ENCODE measurements at regions of chr1 and their contacts with region 1.

Region 1: DNA sequence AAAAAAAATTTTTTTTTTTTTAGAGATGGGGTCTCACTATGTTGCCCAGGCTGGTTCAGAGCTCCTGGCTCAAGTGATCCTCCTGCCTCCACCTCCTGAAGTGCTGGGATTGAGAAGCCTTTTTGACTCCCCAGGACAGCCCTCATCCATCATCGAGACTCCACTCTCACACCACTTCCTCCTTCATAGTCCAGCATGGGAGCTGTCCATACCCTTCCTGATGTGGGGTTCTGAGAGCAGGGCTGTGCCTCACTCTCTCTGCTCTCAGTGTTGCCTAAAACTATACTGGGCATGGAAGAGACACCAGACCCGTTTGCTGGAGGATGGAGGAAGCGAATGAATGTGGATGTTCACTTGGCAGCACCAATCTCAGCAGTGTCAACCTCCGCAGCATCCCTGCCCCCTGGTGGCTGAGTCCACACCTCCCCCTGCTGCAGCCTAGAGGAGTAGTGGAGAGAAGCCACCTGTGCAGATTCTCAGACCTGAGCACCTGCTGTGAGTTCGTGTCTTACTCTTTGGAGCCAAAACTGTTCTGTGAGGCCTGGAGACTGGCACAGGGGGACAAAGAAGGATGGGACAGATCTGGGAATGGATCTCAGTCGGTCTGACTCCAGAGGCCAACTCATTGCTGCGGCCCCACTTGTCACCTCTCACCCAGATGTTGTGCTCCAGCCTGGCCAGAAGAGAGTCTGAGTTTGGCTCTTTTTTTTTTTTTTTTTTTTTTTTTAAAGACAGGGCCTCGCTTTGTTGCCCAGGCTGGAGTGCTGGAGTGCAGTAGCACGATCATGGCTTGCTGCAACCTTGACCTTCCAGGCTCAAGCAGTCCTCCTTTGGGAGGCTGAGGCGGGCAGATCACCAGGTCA is 17.7 kb downstream of the TINAGL1 start:
- DNase-seq: peak; percentile 68
- ATAC-seq: peak; percentile 92
- H3K4me3 ChIP-seq: no peak overlapping the region
- H3K27ac ChIP-seq: no peak overlapping the region
- H3K4me1 ChIP-seq: peaks cover 33 to 40% of the 10 kb centered on the region in 2 experiments
- H3K27me3 ChIP-seq: no peaks in the 10 kb centered on the region
- CTCF ChIP-seq: peak; percentile 93 to 97 (median 96)
- POLR2A ChIP-seq: no peak
- RAD21 ChIP-seq: peak; percentile 96

Region 2: GRCh38 chr1:31155216-31155841 is 438.7 kb before region 1 on chr1:
- CTCF ChIA-PET with region 1: no interaction called
- POLR2A ChIA-PET with region 1: no interaction called
- RAD21 ChIA-PET with region 1: no interaction called
- intact Hi-C with region 1: no loop called
- DNase-seq: no peak
- ATAC-seq: peak; percentile 86
- H3K4me3 ChIP-seq: peak overlapping the region; percentile 58 to 62
- H3K27ac ChIP-seq: peak overlapping the region; percentile 88
- H3K4me1 ChIP-seq: peaks cover 9 to 21% of the 10 kb centered on the region in 2 experiments
- H3K27me3 ChIP-seq: no peaks in the 10 kb centered on the region
- CTCF ChIP-seq: peak in 2 of 3 experiments; percentile 24 to 27; a peak in 1 of 6 replicates
- POLR2A ChIP-seq: no peak
- RAD21 ChIP-seq: no peak

Region 3: DNA sequence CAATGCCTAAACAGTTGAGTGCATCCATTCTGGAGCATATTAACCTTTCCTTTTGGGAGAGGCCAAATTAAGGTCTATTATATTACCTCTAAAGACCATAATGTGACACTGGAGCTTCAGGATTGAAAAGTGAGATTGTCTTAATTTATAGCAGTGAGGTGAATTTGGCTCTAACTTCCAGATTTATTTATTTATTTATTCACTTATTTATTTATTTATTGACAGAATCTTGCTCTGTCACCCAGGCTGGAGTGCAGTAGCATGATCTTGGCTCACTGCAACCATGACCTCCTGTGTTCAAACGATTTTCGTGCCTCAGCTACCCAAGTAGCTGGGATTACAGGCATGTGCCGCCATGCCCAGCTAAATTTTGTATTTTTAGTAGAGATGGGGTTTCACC is 278.1 kb before region 1 on chr1:
- CTCF ChIA-PET with region 1: no interaction called
- POLR2A ChIA-PET with region 1: no interaction called
- RAD21 ChIA-PET with region 1: no interaction called
- intact Hi-C with region 1: no loop called
- DNase-seq: no peak
- ATAC-seq: no peak
- H3K4me3 ChIP-seq: no peak overlapping the region
- H3K27ac ChIP-seq: no peak overlapping the region
- H3K4me1 ChIP-seq: no peaks in the 10 kb centered on the region
- H3K27me3 ChIP-seq: no peaks in the 10 kb centered on the region
- CTCF ChIP-seq: no peak
- POLR2A ChIP-seq: no peak
- RAD21 ChIP-seq: no peak

Region 4: DNA sequence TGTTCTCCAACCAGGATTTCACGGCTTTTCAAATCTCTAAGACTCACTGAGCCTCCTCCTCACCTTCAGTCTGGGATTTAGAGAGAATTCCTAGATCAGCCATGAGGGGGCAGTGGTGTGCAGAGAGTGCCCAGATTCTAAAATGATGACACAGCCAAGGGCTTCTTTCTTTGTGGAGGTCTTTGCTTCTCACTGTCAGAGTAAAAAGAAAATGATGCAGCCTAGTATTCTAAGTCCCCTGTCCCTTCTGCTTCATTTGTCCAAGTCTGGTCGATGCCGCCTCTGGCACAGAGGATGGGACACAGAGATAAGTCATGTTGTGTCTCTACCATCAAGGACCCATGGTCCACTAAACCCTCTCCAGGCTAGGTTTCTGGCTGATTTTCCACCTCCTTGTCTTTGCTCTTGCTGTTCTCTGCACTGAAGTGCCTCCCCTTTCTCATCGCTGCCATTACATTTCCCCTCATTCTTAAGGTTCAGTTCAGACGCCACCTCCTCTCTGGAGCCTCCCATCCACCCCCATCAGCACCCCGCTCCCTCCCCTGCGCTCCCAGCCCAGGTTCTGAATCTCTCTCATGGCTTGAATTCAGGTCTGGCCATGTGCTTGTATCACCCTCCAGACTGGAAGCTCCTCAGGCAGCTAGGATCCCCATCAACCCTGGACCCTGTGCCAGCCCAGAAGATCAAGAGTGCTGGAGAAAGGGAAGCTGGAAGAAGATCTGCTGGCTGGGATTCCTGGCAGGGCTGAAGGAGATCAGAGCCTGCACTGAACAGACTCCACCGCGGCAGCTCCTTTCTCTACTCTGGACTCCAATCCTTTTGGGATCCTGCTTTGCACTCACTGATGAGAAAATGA is 29.6 kb before region 1 on chr1:
- CTCF ChIA-PET with region 1: interaction called, 6 read pairs
- POLR2A ChIA-PET with region 1: no interaction called
- RAD21 ChIA-PET with region 1: interaction called in 1 of 2 experiments, 3 read pairs
- intact Hi-C with region 1: loop called (anchors 1 kb)
- DNase-seq: no peak
- ATAC-seq: peak; percentile 64
- H3K4me3 ChIP-seq: no peak overlapping the region
- H3K27ac ChIP-seq: no peak overlapping the region
- H3K4me1 ChIP-seq: peaks cover 31 to 56% of the 10 kb centered on the region in 2 experiments
- H3K27me3 ChIP-seq: no peaks in the 10 kb centered on the region
- CTCF ChIP-seq: peak; percentile 76 to 97 (median 89)
- POLR2A ChIP-seq: no peak
- RAD21 ChIP-seq: peak; percentile 97

Region 5: DNA sequence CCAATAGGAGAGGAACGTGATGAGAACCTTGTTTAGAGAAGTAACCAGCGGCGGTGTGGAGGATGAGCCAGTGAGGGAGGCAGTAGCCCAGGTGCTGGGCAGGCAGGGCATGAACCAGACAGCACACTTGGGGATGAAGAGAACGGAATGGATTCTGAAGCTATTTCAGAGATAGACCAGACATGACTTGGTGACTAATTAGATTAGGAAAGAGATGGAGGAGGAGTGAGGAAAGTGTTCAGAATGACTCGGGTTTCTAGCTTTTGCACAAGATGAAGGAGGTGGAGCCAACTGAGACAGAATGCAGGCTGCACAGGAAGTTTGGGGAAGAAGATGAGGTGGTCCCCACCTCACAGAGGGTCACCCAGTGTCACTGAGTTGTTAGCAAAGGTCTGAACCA is 45.5 kb after region 1 on chr1:
- CTCF ChIA-PET with region 1: no interaction called
- POLR2A ChIA-PET with region 1: no interaction called
- RAD21 ChIA-PET with region 1: no interaction called
- intact Hi-C with region 1: no loop called
- DNase-seq: no peak
- ATAC-seq: no peak
- H3K4me3 ChIP-seq: no peak overlapping the region
- H3K27ac ChIP-seq: no peak overlapping the region
- H3K4me1 ChIP-seq: peaks cover 5 to 17% of the 10 kb centered on the region in 2 experiments; a peak in 3 of 4 replicates
- H3K27me3 ChIP-seq: no peaks in the 10 kb centered on the region
- CTCF ChIP-seq: no peak
- POLR2A ChIP-seq: no peak
- RAD21 ChIP-seq: no peak